Activated CD4-positive, alpha-beta memory T cell treated with anti-CD3 and anti-CD28 coated beads for 36 hours (primary cell): ENCODE measurements at regions of chr17 and their contacts with region 1.

Region 1: DNA sequence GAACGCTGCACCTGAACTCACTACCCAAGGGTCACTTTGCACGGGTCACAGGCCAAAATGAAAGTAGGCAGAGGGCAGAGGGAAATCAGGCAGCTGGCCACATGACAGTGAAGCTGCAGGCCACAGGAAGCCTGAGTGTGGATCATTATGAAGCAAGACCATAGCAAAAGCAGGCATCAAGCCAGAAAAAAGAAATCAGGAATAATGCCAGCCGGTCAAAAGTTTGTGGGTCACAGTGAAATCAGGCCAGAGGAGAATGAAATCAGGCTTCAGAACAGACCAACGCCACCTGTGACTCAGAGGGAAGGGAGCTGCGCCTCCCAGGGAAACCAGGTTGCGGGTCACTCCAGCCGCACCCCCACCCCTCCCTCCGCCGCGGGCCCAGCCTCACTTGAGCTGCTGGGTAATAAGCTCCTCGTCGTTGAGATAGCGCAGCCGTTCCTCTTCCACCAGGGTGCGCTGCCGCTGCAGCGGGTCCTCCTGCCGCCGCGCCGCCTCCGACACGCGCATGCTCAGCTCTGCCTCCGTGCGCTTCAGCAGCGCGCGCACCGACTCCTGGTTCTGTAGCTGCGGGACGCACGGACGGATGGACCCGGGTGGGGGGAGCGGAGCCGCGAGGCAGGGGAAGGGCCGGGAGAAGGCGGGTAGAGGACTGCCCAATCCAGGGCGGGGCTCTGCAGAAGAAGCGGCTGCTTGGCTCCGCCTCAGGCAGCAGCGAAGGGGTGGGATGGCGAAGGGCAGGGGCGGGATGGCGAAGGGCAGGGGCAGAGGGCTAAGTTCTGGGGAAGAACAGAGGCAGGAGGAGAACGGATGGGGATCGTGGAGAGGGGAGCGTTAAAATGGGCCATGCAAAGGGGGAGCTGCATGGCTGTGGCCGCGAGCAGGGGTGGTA is 47.7 kb downstream of the SRCIN1 start:
- DNase-seq: peak; percentile 93
- H3K4me3 Mint-ChIP-seq: peak overlapping the region; percentile 83
- H3K27ac Mint-ChIP-seq: no peak overlapping the region
- H3K4me1 Mint-ChIP-seq: peaks cover 22% of the 10 kb centered on the region
- H3K27me3 Mint-ChIP-seq: peaks cover 21% of the 10 kb centered on the region

Region 2: DNA sequence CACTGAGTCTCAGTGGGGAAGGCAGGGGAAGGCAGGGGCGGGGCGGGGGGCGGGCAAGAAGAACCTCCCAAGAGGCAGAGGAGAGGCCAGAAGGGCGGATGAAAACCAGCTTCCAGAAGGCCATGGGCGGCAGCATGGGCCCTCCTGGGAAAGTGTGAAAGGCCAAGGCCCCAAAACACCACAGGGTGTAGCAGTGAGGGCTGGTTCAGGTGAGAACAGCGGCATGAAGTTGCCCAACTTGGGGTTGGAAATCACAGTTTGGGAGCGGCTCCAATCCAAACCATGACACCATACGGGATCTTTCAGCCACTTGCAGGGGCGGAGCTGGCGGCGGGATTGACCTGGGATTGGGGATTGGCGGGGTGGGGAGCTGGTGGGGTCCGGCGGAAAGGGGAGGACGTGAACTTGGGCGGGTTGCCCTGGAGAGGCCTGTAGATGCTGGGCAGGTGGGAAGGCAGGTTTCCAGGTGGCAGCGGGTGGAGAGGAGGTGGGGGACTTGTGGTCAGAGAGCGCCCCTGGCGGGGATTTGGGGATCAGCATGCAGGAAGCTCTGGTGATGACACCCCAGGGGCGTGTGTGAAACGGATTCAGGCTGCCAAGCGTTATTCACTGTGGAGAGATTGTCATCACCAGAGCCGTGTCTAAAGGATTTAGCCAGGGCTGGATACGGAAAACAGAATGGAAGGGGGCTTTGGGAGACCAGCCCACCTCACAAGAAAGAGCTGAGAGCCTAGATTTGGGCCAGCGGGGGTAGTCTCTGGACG is 48.9 kb before region 1 on chr17:
- CTCF ChIA-PET with region 1: interaction called, 13 read pairs
- POLR2A ChIA-PET with region 1: no interaction called
- intact Hi-C with region 1: no loop called
- DNase-seq: peak; percentile 87
- H3K4me3 Mint-ChIP-seq: peak overlapping the region; percentile 71
- H3K27ac Mint-ChIP-seq: no peak overlapping the region
- H3K4me1 Mint-ChIP-seq: peaks cover 9% of the 10 kb centered on the region
- H3K27me3 Mint-ChIP-seq: peaks cover 39% of the 10 kb centered on the region

Region 3: GRCh38 chr17:38578229-38579082 is 20.4 kb after region 1 on chr17:
- CTCF ChIA-PET with region 1: interaction called, 196 read pairs
- POLR2A ChIA-PET with region 1: interaction called, 9 read pairs
- intact Hi-C with region 1: no loop called
- DNase-seq: no peak
- H3K4me3 Mint-ChIP-seq: no peak overlapping the region
- H3K27ac Mint-ChIP-seq: no peak overlapping the region
- H3K4me1 Mint-ChIP-seq: peaks cover 3% of the 10 kb centered on the region
- H3K27me3 Mint-ChIP-seq: peaks cover 72% of the 10 kb centered on the region

Region 4: GRCh38 chr17:38590988-38591758 is 33.1 kb after region 1 on chr17:
- CTCF ChIA-PET with region 1: interaction called, 196 read pairs
- POLR2A ChIA-PET with region 1: no interaction called
- intact Hi-C with region 1: no loop called
- DNase-seq: no peak
- H3K4me3 Mint-ChIP-seq: no peak overlapping the region
- H3K27ac Mint-ChIP-seq: no peak overlapping the region
- H3K4me1 Mint-ChIP-seq: peaks cover 22% of the 10 kb centered on the region
- H3K27me3 Mint-ChIP-seq: peaks cover 80% of the 10 kb centered on the region

Region 5: GRCh38 chr17:38605888-38606645 is 48.0 kb after region 1 on chr17 and contains the start of gene SRCIN1:
- CTCF ChIA-PET with region 1: interaction called, 52 read pairs
- POLR2A ChIA-PET with region 1: no interaction called
- intact Hi-C with region 1: loop called (anchors 2 kb)
- DNase-seq: peak; percentile 70
- H3K4me3 Mint-ChIP-seq: peak within 1 kb of the TSS; percentile 65
- H3K27ac Mint-ChIP-seq: no peak within 1 kb of the TSS
- H3K4me1 Mint-ChIP-seq: peaks cover 9% of the 10 kb centered on the region
- H3K27me3 Mint-ChIP-seq: peaks cover 69% of the 10 kb centered on the region
- total RNA-seq, gene SRCIN1: 0.92 to 1.6 TPM

Region 6: DNA sequence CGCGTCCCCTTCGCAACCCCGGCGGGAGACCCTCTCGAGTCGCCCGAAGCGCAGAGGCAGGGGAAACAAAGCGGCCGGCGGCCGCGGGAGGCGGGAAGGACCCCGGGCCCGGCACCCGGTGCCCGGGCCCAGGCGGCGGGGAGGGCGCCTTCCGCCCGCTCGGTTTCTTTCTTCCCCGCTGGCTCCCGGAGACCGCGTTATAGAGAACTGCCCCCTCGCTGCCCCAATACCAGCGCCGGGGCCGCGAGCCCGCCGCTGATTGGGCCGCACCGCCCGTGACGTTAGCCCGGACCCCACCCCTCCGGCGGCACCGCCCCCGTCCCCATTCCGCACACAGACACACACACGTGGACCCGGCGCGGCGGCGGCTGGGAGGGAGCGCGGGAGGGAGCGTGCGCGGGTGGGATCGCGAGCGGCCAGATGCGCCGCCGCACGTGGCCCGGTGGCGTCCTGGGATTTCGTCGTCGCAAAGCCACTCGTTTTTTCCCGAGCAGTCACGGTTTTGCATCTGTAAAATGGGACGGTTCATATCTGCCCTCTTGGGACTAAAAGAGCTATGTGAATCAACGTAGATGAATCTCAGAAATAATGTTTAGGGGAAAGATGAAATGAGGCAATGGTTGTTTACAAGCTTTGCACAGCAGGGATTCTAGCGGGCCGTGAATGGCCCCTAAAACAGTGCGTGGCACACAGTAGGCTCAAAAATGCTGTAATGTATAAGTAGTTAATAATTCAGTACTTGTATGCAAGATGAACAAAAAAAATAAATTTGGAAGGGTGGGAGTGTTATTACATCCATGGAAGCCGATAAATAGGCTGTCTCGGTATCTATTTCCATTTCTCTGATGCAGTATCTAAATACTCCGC is 116.9 kb after region 1 on chr17 and contains the start of gene EPOP:
- CTCF ChIA-PET with region 1: interaction called, 302 read pairs
- POLR2A ChIA-PET with region 1: no interaction called
- intact Hi-C with region 1: no loop called
- DNase-seq: peak; percentile 94
- H3K4me3 Mint-ChIP-seq: peak within 1 kb of the TSS; percentile 62
- H3K27ac Mint-ChIP-seq: peak within 1 kb of the TSS; percentile 93
- H3K4me1 Mint-ChIP-seq: peaks cover 46% of the 10 kb centered on the region
- H3K27me3 Mint-ChIP-seq: peaks cover 10% of the 10 kb centered on the region
- total RNA-seq, gene EPOP: 37.1 to 38.0 TPM

Region 7: DNA sequence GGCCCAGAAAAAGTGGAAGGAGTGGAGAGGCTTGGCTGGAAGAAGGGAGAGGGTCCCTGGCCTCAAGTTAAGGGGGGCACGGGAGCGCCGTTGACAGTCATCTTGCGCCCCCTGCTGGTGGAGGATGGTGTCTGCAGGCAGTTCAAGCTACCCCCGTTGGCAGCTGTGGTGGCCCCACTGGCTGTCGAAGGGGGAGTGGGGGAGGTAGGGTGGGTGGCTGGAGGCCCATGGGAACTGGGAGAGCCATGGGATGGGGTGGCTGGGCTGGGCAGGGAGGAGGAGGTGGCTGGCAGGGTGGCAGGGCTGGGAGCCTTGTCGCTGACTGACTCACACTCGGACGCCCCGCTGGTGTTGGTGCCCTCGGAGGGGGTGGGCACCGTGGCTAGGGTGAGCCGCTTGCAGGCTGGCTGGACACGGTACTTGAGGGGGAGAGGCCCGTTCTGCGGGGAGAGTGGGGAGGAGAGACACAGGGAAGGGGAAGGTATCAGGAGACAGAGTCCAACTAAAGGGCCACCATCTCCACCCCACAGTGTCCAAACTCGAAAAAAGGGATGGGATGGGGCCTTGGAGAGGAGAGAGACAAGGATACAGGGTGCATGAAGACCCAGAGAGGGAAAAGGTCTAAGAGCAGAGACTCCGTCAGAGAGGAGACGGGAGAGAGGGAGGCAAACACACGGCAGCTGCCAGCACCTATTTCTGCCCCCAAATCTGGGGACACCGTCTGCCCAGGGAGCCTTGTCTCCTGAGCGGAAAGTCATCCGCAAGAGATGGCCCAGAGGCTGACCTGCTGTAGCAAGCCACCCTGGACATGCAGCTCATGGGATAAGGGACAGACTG is 177.3 kb after region 1 on chr17:
- CTCF ChIA-PET with region 1: interaction called, 30 read pairs
- POLR2A ChIA-PET with region 1: no interaction called
- intact Hi-C with region 1: loop called (anchors 5 kb)
- DNase-seq: peak; percentile 78
- H3K4me3 Mint-ChIP-seq: no peak overlapping the region
- H3K27ac Mint-ChIP-seq: no peak overlapping the region
- H3K4me1 Mint-ChIP-seq: peaks cover 42% of the 10 kb centered on the region
- H3K27me3 Mint-ChIP-seq: peaks cover 6% of the 10 kb centered on the region